ENCODE measurements at regions of chr21 and their contacts with region 1.

Region 1: GRCh38 chr21:14454016-14455009 is 71.4 kb upstream of the HSPA13 start:
- DNase-seq: no peak
- ATAC-seq: peak; percentile 41
- H3K4me3 Mint-ChIP-seq: peak overlapping the region; percentile 37
- H3K27ac Mint-ChIP-seq: peak overlapping the region; percentile 90
- H3K4me1 Mint-ChIP-seq: peaks cover 50% of the 10 kb centered on the region
- H3K27me3 Mint-ChIP-seq: peaks cover 3% of the 10 kb centered on the region
- CTCF ChIP-seq: no peak

Region 2: GRCh38 chr21:14482165-14482564 is 27.9 kb after region 1 on chr21:
- CTCF ChIA-PET with region 1: interaction called, 3 read pairs
- POLR2A ChIA-PET with region 1: interaction called, 11 read pairs
- intact Hi-C with region 1: no loop called
- DNase-seq: peak; percentile 68
- ATAC-seq: peak; percentile 83
- H3K4me3 Mint-ChIP-seq: peak overlapping the region; percentile 37
- H3K27ac Mint-ChIP-seq: peak overlapping the region; percentile 96
- H3K4me1 Mint-ChIP-seq: peaks cover 70% of the 10 kb centered on the region
- H3K27me3 Mint-ChIP-seq: no peaks in the 10 kb centered on the region
- CTCF ChIP-seq: no peak

Region 3: GRCh38 chr21:14533504-14534428 is 79.5 kb after region 1 on chr21:
- CTCF ChIA-PET with region 1: no interaction called
- POLR2A ChIA-PET with region 1: interaction called, 8 read pairs
- intact Hi-C with region 1: loop called (anchors 5 kb)
- DNase-seq: no peak
- ATAC-seq: peak; percentile 79
- H3K4me3 Mint-ChIP-seq: peak overlapping the region; percentile 72
- H3K27ac Mint-ChIP-seq: peak overlapping the region; percentile 99
- H3K4me1 Mint-ChIP-seq: peaks cover 78% of the 10 kb centered on the region
- H3K27me3 Mint-ChIP-seq: no peaks in the 10 kb centered on the region
- CTCF ChIP-seq: no peak

Measured in activated CD8-positive, alpha-beta T cell treated with anti-CD3 and anti-CD28 coated beads for 36 hours (primary cell).